ENCODE measurements at regions of chr20 and their contacts with region 1.

Region 1: GRCh38 chr20:33666293-33667244 is at the start of gene ACTL10:
- DNase-seq: peak; percentile 70 to 79
- H3K4me3 ChIP-seq: peak within 1 kb of the TSS; percentile 27 to 56 (median 30)
- H3K27ac ChIP-seq: no peak within 1 kb of the TSS
- H3K4me1 ChIP-seq: peaks cover 0 to 18% (median 11%) of the 10 kb centered on the region in 4 experiments; a peak in 4 of 7 replicates
- H3K27me3 ChIP-seq: peaks cover 0 to 10% (median 3%) of the 10 kb centered on the region in 4 experiments; a peak in 3 of 7 replicates
- CTCF ChIP-seq: peak in 1 of 3 experiments; percentile 6; a peak in 1 of 4 replicates
- EP300 ChIP-seq: no peak
- POLR2A ChIP-seq: peak in 1 of 2 experiments; percentile 37; a peak in 1 of 3 replicates
- RAD21 ChIP-seq: no peak
- total RNA-seq, gene ACTL10: not detected in 2 replicates

Region 2: DNA sequence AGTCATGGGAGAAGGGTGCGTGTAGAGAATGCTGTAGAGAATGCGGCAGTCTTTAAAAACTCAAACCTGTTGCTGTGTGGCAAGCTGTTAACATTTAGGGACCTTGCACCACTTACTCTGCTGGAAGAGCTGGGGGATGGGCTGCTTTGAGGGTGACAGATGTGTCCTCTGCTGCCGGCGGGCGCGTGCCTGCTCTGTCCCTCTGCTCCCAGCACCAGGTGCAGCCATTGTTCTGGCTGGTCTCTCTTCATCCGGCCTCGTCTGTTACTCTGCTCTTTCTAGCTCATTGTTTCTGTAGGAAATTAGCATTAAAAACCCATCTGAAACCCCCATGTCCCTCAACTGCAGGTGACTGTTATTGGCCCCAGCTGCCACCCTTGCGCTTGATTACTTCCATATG is 98.2 kb before region 1 on chr20:
- CTCF ChIA-PET with region 1: no interaction called
- POLR2A ChIA-PET with region 1: no interaction called
- DNase-seq: peak; percentile 75 to 89
- H3K4me3 ChIP-seq: peak overlapping the region in 1 of 4 experiments; percentile 27; a peak in 3 of 8 replicates
- H3K27ac ChIP-seq: no peak overlapping the region
- H3K4me1 ChIP-seq: peaks cover 0 to 12% (median 8%) of the 10 kb centered on the region in 4 experiments; a peak in 3 of 7 replicates
- H3K27me3 ChIP-seq: peaks cover 0 to 14% (median 10%) of the 10 kb centered on the region in 4 experiments; a peak in 4 of 7 replicates
- CTCF ChIP-seq: no peak
- EP300 ChIP-seq: peak in 1 of 2 experiments; percentile 96; a peak in 2 of 3 replicates
- POLR2A ChIP-seq: no peak
- RAD21 ChIP-seq: peak in 1 of 2 experiments; percentile 14; a peak in 1 of 4 replicates

Region 3: DNA sequence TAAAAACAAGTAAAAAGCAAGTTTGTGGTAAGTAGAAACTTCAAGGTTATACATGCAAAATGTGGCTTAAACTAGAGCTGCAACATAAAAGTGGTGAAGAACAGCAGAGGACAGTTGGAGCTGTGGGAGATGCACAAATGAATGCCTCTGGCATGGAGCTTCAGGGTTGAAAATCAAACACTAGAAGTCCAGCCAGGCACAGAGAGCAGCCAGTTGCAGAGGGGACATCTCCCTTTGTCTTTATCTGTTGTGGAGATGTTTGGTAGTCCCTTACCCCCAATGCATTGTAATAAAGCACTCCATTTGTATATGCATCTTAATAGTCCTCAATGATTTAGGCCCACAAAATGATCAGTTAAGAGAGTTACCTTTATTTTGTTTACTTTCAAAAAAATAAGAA is 77.5 kb before region 1 on chr20:
- CTCF ChIA-PET with region 1: no interaction called
- POLR2A ChIA-PET with region 1: no interaction called
- DNase-seq: no peak
- H3K4me3 ChIP-seq: no peak overlapping the region
- H3K27ac ChIP-seq: no peak overlapping the region
- H3K4me1 ChIP-seq: no peaks in the 10 kb centered on the region
- H3K27me3 ChIP-seq: no peaks in the 10 kb centered on the region
- CTCF ChIP-seq: no peak
- EP300 ChIP-seq: no peak
- POLR2A ChIP-seq: no peak
- RAD21 ChIP-seq: no peak

Region 4: GRCh38 chr20:33653218-33653899 is 13.2 kb before region 1 on chr20:
- CTCF ChIA-PET with region 1: interaction called, 38 read pairs
- POLR2A ChIA-PET with region 1: interaction called, 63 read pairs
- DNase-seq: peak; percentile 69 to 86
- H3K4me3 ChIP-seq: no peak overlapping the region
- H3K27ac ChIP-seq: no peak overlapping the region
- H3K4me1 ChIP-seq: peaks cover 0 to 11% (median 1%) of the 10 kb centered on the region in 4 experiments; a peak in 4 of 7 replicates
- H3K27me3 ChIP-seq: no peaks in the 10 kb centered on the region
- CTCF ChIP-seq: peak; percentile 94 to 97 (median 96)
- EP300 ChIP-seq: no peak
- POLR2A ChIP-seq: peak in 1 of 2 experiments; percentile 67; a peak in 1 of 3 replicates
- RAD21 ChIP-seq: peak; percentile 95 to 97

Region 5: GRCh38 chr20:33679758-33680485 is 13.4 kb after region 1 on chr20:
- CTCF ChIA-PET with region 1: interaction called, 17 read pairs
- POLR2A ChIA-PET with region 1: interaction called, 245 read pairs
- DNase-seq: no peak
- H3K4me3 ChIP-seq: no peak overlapping the region
- H3K27ac ChIP-seq: no peak overlapping the region
- H3K4me1 ChIP-seq: peaks cover 4 to 20% (median 7%) of the 10 kb centered on the region in 4 experiments
- H3K27me3 ChIP-seq: no peaks in the 10 kb centered on the region
- CTCF ChIP-seq: no peak
- EP300 ChIP-seq: no peak
- POLR2A ChIP-seq: peak in 1 of 2 experiments; percentile 14; a peak in 1 of 3 replicates
- RAD21 ChIP-seq: no peak

Region 6: GRCh38 chr20:33686100-33686983 is 19.8 kb after region 1 on chr20 and contains the start of gene E2F1:
- CTCF ChIA-PET with region 1: interaction called, 17 read pairs
- POLR2A ChIA-PET with region 1: interaction called, 245 read pairs
- DNase-seq: peak in 1 of 2 experiments; percentile 97
- H3K4me3 ChIP-seq: peak within 1 kb of the TSS; percentile 86 to 97 (median 94)
- H3K27ac ChIP-seq: peak within 1 kb of the TSS; percentile 64
- H3K4me1 ChIP-seq: peaks cover 4 to 25% (median 15%) of the 10 kb centered on the region in 4 experiments
- H3K27me3 ChIP-seq: peaks cover 0 to 9% (median 2%) of the 10 kb centered on the region in 4 experiments; a peak in 4 of 7 replicates
- CTCF ChIP-seq: peak in 1 of 3 experiments; percentile 34; a peak in 2 of 4 replicates
- EP300 ChIP-seq: no peak
- POLR2A ChIP-seq: peak; percentile 60 to 69
- RAD21 ChIP-seq: peak in 1 of 2 experiments; percentile 2; a peak in 1 of 4 replicates
- total RNA-seq, gene E2F1: 35.3 and 35.8 TPM in 2 replicates